ENCODE measurements at regions of chr2 and their contacts with region 1.

Region 1: GRCh38 chr2:197453161-197453914 is at the start of gene COQ10B:
- DNase-seq: peak; percentile 100
- total RNA-seq, gene COQ10B: 38.5 TPM

Region 2: DNA sequence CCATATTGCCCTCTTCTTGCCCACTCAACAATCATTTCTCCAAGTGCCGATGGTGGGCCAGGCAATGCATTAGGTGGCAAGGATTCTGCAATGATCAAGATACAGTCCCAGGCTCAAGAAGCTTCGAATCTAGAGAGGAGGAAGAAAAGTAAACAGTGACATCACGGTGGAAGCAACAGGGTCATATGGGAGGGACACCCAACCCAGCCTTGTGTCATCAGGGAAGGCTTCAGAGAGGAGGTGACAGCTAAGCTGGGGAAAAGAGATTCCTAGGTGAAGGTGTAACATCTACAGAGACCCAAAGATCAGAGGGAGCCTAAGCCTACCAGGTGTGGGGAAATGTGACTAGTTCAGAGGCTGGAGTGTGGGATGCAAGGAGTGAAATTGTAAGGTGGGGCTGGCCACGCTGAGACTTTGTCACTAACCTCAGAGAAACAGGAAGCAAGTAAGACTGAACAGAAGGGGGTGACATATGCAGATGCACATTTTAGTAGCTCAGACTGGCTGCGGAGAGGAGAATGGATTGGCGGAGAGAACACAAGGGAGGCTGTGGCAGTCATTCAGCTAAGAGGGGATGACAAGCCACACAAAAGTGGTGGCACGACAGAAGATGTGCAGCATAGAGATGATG is 247.6 kb before region 1 on chr2:
- intact Hi-C with region 1: no loop called
- DNase-seq: no peak

Region 3: GRCh38 chr2:197434541-197435513 is 18.5 kb before region 1 on chr2 and contains the start of gene SF3B1:
- intact Hi-C with region 1: loop called (anchors 1 kb)
- DNase-seq: peak; percentile 99
- total RNA-seq, gene SF3B1: 144 TPM